Breast epithelium (tissue), 4 donors: ENCODE measurements at regions of chr19 and their contacts with region 1.

Region 1: DNA sequence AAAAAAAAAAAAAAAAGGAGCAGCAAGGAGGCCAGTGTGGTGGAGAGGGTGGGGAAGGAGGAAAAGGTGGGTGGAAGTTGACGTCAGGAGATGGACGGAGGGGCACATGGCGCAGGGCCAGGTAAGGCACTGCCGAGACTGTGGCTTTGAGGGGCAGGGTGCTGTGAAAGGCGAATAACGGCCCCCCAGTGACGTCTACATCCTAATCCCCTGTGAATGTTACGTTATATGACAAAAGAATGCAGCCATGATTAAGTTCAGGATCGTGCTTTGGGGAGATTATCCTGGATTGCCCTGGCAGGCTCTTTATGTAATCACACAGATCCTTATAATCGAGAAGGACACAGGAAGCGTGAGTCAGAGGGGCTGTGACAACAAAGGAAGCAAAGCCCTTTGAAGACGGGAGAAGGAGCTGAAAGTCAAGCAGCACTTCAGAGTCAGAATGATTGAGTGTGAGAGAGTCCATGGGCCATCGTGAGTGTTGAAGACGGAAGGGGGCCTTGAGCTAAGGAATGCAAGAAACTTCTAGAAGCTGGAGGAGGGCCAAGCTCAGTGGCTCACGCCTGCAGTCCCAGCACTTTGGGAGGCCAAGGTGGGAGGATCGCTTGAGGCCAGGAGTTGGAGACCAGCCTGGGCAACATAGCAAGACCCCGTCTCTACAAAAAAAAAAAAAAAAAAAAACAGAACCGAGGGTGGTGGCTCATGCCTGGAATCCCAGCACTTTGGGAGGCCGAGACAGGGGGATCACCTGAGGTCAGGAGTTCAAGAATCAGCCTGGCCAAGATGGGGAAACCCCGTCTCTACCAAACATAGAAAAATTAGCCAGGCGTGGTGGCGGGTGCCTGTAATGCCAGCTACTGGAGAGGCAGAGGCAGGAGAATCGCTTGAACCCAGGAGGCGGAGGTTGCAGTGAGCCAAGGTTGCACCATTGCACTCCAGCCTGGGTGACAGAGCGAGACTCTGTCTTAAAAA is 13.8 kb upstream of the CEACAM16 start:
- DNase-seq: no peak
- H3K4me3 ChIP-seq: no peak overlapping the region
- H3K27ac ChIP-seq: no peak overlapping the region
- H3K4me1 ChIP-seq: no peaks in the 10 kb centered on the region
- H3K27me3 ChIP-seq: no peaks in the 10 kb centered on the region
- CTCF ChIP-seq: no peak
- POLR2A ChIP-seq: no peak

Region 2: DNA sequence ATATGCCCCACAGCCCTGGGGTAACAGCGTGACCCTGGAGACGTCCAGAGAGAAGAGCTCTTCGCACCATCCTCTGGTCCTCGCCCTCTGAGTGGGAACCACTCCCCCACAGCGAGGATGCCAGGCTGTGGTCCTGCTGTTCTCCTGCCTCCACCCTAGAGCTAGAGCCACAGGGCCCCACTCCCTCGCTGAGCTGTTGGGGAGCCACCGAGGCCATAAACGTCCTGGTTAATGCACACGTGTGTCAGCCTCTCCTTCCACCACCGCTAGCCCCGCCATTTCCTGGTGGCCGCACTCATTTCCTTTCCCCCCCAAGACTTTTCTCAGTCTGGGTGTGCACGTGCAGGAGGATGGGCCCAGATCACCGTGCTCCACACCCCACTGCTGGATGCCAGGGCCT is 25.3 kb after region 1 on chr19:
- intact Hi-C with region 1: loop called (anchors 1 kb)
- DNase-seq: no peak
- H3K4me3 ChIP-seq: no peak overlapping the region
- H3K27ac ChIP-seq: no peak overlapping the region
- H3K4me1 ChIP-seq: no peaks in the 10 kb centered on the region
- H3K27me3 ChIP-seq: no peaks in the 10 kb centered on the region
- CTCF ChIP-seq: no peak
- POLR2A ChIP-seq: no peak